Naive thymus-derived CD4-positive, alpha-beta T cell (primary cell): ENCODE measurements at regions of chr1 and their contacts with region 1.

Region 1: DNA sequence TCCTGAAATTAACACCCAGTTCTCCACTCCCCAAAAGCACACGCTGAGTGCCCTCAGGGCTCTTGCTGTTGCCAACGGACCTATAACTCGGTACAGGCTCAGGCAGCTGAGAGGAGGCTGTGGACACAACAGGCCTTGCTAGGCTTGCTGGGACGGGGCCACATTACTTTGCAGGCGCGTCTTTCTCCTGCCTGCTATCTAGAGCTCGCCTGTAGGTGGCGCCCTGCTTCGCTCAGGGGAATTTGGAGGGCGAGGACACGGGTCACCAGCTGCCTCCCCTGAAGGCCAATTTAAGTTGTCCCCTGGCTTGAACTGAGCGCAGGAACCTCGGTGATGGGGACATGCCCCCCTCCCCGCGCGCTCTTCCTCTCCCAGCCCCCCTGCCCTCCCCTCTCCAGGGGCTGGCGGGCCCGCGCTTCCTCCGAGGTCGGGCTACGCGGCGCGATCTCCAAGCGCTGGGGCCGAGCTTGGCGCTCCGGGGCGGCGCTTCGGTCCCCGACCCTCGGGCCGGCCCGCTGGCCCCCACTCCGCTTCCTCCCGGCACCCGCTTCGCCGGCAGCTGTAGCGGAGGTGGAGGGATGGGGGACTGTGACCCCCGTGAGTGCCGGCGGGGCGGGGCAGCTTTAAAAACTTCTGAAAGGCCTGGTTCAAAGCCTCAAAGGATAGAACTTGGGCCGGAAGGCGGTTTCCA is 32.4 kb upstream of the NFIA start:
- DNase-seq: peak; percentile 69 to 93 (median 84)
- ATAC-seq: peak; percentile 95
- H3K4me3 ChIP-seq: peak overlapping the region; percentile 64
- H3K4me3 Mint-ChIP-seq: peak overlapping the region; percentile 69 to 88 (median 80)
- H3K27ac ChIP-seq: no peak overlapping the region
- H3K27ac Mint-ChIP-seq: peak overlapping the region in 1 of 9 donors; percentile 38
- H3K4me1 ChIP-seq: peaks cover 10 to 15% of the 10 kb centered on the region in 2 donors
- H3K4me1 Mint-ChIP-seq: peaks cover 17 to 37% (median 26%) of the 10 kb centered on the region in 7 donors
- H3K27me3 ChIP-seq: peaks cover 4 to 6% of the 10 kb centered on the region in 2 donors
- H3K27me3 Mint-ChIP-seq: peaks cover 39 to 61% (median 45%) of the 10 kb centered on the region in 5 donors

Region 2: DNA sequence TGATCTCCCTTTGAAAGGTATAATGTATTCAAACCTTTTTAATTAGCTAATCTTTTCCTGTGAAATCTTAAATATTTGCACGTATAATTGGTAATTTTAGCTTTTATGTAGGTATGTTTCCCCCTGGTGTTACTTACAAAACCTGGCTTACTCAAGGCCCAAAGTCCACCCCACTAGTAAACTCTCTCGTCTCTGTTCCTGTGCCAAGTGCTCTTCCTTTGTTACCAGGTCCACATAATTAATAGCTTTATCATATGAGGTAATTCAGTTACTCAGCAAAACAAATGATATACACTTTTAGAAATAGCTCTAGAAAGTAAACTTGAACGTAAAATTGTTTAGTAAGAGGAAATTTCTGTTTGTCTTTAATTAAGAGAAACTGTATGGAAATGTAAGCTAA is 69.1 kb after region 1 on chr1:
- CTCF ChIA-PET with region 1: interaction called, 6 read pairs
- POLR2A ChIA-PET with region 1: no interaction called
- intact Hi-C with region 1: loop called in 1 of 2 experiments (anchors 1 kb)
- DNase-seq: no peak
- ATAC-seq: no peak
- H3K4me3 ChIP-seq: no peak overlapping the region
- H3K4me3 Mint-ChIP-seq: no peak overlapping the region
- H3K27ac ChIP-seq: no peak overlapping the region
- H3K27ac Mint-ChIP-seq: no peak overlapping the region
- H3K4me1 ChIP-seq: no peaks in the 10 kb centered on the region
- H3K4me1 Mint-ChIP-seq: peaks cover 0 to 3% (median 0%) of the 10 kb centered on the region in 7 donors
- H3K27me3 ChIP-seq: no peaks in the 10 kb centered on the region
- H3K27me3 Mint-ChIP-seq: peaks cover 0 to 30% (median 4%) of the 10 kb centered on the region in 5 donors

Region 3: GRCh38 chr1:61270761-61271411 is 220.9 kb after region 1 on chr1:
- CTCF ChIA-PET with region 1: no interaction called
- POLR2A ChIA-PET with region 1: no interaction called
- intact Hi-C with region 1: no loop called
- DNase-seq: no peak
- ATAC-seq: peak; percentile 31
- H3K4me3 ChIP-seq: no peak overlapping the region
- H3K4me3 Mint-ChIP-seq: no peak overlapping the region
- H3K27ac ChIP-seq: no peak overlapping the region
- H3K27ac Mint-ChIP-seq: no peak overlapping the region
- H3K4me1 ChIP-seq: no peaks in the 10 kb centered on the region
- H3K4me1 Mint-ChIP-seq: peaks cover 0 to 2% (median 0%) of the 10 kb centered on the region in 7 donors
- H3K27me3 ChIP-seq: no peaks in the 10 kb centered on the region
- H3K27me3 Mint-ChIP-seq: peaks cover 0 to 9% (median 0%) of the 10 kb centered on the region in 5 donors

Region 4: DNA sequence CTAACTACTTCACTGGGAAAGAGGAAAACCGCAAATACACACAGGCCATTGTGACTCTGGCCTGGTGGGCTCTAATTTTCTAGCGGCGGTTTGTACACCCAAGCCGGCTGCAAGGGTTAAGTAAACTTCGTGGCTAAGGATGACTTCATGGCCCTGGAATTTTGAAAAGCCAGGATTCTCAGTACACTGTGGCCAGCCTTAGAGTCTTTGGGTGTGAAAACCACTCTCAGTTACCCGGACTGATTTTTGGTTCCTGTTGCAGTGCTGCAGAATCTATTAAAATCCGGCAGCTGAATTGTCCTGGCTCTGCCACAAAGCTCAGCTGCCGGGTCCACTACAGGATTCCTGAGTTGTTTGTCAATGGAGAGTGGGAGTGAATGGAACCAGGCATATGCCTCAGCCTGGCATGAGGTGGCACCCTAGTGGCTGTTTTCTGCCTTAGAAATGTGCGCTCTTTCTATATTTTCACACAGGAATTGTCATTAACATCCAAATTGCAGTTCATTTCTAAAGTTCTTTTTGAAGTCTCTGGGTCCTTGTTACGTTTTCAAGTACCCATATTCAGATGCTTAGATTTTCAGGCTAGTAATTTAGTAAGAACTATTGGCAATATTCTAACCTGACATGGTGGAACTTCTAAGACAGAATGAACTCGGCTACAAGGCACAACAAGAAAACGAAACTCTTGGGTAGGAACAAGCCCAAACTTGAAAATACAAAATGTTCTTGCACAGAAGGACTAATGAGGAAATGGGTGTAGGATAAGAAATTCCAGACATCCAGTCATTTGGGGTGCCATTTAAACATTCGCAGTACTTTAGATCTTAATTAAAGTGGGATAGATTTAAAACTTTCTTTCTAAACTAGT is 288.2 kb after region 1 on chr1:
- CTCF ChIA-PET with region 1: interaction called, 5 read pairs
- POLR2A ChIA-PET with region 1: no interaction called
- intact Hi-C with region 1: loop called in 1 of 2 experiments (anchors 10 kb)
- DNase-seq: no peak
- ATAC-seq: peak; percentile 24
- H3K4me3 ChIP-seq: no peak overlapping the region
- H3K4me3 Mint-ChIP-seq: no peak overlapping the region
- H3K27ac ChIP-seq: no peak overlapping the region
- H3K27ac Mint-ChIP-seq: no peak overlapping the region
- H3K4me1 ChIP-seq: no peaks in the 10 kb centered on the region
- H3K4me1 Mint-ChIP-seq: no peaks in the 10 kb centered on the region
- H3K27me3 ChIP-seq: no peaks in the 10 kb centered on the region
- H3K27me3 Mint-ChIP-seq: peaks cover 0 to 9% (median 0%) of the 10 kb centered on the region in 5 donors

Region 5: GRCh38 chr1:61588736-61589672 is 539.0 kb after region 1 on chr1:
- CTCF ChIA-PET with region 1: interaction called, 13 read pairs
- POLR2A ChIA-PET with region 1: no interaction called
- intact Hi-C with region 1: loop called (anchors 1 to 5 kb)
- DNase-seq: peak in 8 of 9 donors; percentile 7 to 53 (median 46)
- ATAC-seq: peak; percentile 74
- H3K4me3 ChIP-seq: no peak overlapping the region
- H3K4me3 Mint-ChIP-seq: no peak overlapping the region
- H3K27ac ChIP-seq: no peak overlapping the region
- H3K27ac Mint-ChIP-seq: no peak overlapping the region
- H3K4me1 ChIP-seq: no peaks in the 10 kb centered on the region
- H3K4me1 Mint-ChIP-seq: peaks cover 0 to 3% (median 0%) of the 10 kb centered on the region in 7 donors
- H3K27me3 ChIP-seq: no peaks in the 10 kb centered on the region
- H3K27me3 Mint-ChIP-seq: peaks cover 0 to 10% (median 8%) of the 10 kb centered on the region in 5 donors

Region 6: DNA sequence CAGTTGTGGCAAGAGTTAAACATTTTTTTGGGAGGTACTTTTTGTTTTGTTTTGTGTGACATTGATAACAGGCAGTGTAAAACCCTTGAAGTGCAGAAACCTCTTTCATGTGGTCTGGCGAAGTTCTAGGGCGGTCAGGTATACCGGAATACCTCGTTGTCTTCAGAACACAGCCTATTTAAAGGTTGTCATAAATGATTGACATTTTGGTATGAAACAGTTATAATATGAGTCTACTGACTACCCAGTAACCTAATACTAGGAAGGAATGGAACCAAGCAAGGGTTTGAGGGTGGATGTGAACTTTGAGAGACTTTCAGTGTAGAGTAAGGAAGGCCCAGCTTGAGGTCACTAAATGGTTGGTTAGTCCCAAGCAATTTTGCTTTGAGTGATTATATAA is 732.8 kb after region 1 on chr1:
- CTCF ChIA-PET with region 1: no interaction called
- POLR2A ChIA-PET with region 1: no interaction called
- intact Hi-C with region 1: loop called in 1 of 2 experiments (anchors 10 kb)
- DNase-seq: peak in 8 of 9 donors; percentile 49 to 93 (median 90)
- ATAC-seq: peak; percentile 98
- H3K4me3 ChIP-seq: no peak overlapping the region
- H3K4me3 Mint-ChIP-seq: peak overlapping the region; percentile 66 to 94 (median 76)
- H3K27ac ChIP-seq: peak overlapping the region; percentile 39
- H3K27ac Mint-ChIP-seq: peak overlapping the region; percentile 75 to 95 (median 88)
- H3K4me1 ChIP-seq: peaks cover 26 to 32% of the 10 kb centered on the region in 2 donors
- H3K4me1 Mint-ChIP-seq: peaks cover 18 to 77% (median 67%) of the 10 kb centered on the region in 7 donors
- H3K27me3 ChIP-seq: no peaks in the 10 kb centered on the region
- H3K27me3 Mint-ChIP-seq: no peaks in the 10 kb centered on the region